ENCODE measurements at regions of chr1 and their contacts with region 1.

Region 1: DNA sequence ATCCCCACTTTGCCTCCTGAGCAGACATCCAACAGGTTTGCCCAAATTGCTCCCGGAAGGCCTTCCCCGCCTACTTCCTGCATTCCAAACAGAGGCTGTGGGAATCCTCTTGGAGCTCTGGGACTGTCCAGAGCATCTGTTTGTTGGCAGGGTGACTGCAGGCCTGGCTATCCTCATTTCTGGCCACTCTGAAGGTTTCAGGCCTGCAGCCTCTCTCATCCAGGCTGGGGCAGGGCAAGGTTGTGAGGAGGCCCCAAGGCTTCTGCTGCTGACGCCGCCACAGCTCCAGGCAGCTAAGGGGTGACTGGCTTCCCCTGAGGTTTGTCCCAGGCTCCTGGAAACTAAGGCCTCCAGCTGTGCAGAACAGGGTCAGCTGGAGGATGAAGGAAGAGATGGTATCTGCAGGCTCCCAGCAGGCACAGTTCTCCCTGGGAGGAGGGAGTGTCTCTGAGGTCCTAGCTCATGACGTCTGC is 11.3 kb downstream of the CDK18 start:
- DNase-seq: no peak
- H3K4me3 ChIP-seq: no peak overlapping the region
- H3K27ac ChIP-seq: no peak overlapping the region
- H3K4me1 ChIP-seq: no peaks in the 10 kb centered on the region
- CTCF ChIP-seq: no peak

Region 2: DNA sequence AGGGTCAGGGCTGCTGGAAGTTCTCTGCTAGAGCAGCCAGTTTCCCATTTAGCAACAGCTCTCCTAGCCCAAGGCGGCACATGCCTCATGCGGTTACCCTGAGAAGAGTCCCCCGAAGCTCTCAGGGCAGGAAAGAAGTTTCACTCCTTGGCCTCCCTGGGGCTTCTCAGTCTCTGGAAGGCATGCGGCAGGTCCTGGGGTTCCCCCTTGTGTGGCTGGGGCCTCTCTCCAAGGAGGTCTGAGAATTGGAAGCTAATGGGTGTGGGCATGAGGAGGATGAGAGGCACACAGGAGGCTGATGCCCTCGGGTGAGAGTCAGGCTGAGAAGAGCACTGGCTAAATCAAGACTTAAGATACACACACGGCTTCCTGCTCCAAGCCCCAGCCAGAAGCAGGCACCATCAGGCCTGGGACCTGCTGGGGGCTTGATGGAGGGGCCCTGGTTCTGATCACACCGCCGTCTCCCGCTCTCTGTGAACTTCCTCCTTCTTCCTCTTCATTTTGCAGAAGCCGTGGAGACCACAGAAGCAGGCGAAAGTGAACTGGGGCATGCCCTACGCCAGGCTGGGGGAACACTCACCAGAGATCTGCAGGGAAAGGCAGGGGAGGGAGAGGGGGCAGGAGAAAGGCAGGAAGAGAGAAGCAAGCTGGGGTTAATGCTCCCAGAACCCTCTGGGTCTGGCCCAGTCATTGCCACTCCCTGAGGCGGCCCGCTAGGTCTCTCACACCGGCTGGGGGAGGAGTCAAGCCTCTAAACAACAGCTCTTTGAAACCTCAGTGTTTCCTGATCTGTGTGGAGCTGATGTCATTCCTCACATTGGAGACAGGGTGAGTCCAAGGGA is 75.1 kb before region 1 on chr1:
- CTCF ChIA-PET with region 1: no interaction called
- POLR2A ChIA-PET with region 1: no interaction called
- intact Hi-C with region 1: loop called (anchors 2 kb)
- DNase-seq: peak; percentile 68
- H3K4me3 ChIP-seq: peak overlapping the region; percentile 47
- H3K27ac ChIP-seq: peak overlapping the region; percentile 59
- H3K4me1 ChIP-seq: peaks cover 91% of the 10 kb centered on the region
- CTCF ChIP-seq: no peak

Region 3: GRCh38 chr1:205656236-205656635 is 140.4 kb after region 1 on chr1:
- CTCF ChIA-PET with region 1: no interaction called
- POLR2A ChIA-PET with region 1: no interaction called
- intact Hi-C with region 1: no loop called
- DNase-seq: no peak
- H3K4me3 ChIP-seq: no peak overlapping the region
- H3K27ac ChIP-seq: no peak overlapping the region
- H3K4me1 ChIP-seq: peaks cover 18% of the 10 kb centered on the region
- CTCF ChIP-seq: no peak